WTC11 (cell line): ENCODE measurements at regions of chr6 and their contacts with region 1.

Region 1: DNA sequence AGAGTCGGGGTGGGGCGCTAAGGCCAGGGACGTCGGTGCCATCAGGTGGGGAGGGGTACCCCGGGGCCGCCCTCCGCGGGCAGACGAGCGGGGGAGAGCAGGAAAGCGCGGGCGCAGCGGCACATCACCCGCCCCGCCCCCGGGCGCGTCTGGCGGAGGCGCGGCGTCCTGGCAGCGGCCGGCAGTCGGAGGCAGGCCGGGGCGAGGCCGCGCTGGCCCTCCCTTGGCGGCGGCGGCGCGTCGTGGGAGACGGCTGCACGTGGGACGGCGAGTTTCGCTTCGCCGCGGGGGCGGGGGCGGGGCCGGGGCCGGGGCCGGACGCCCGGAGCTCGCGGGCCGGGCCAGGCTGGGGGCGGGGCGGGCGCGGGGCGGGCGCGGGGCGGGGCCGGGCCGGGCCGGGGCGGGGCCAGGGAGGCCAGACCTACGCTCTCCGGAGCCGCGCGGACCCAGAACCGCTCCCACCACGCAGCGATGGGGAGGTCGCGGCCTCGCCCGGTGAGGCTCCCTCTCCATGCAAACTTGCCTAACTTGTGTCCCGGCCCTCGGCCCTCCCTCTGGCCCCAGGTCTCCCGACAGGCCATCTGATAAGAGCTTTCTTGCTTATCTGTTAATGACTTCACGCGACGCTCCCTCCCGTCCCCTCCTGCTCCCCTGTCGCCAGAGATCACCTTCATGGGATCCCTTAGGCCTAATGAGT is 12.5 kb downstream of the ITPR3 start:
- DNase-seq: peak; percentile 58
- ATAC-seq: peak; percentile 69
- H3K4me3 Mint-ChIP-seq: peak overlapping the region; percentile 83
- H3K27ac Mint-ChIP-seq: peak overlapping the region; percentile 47
- H3K4me1 Mint-ChIP-seq: peaks cover 59% of the 10 kb centered on the region
- H3K27me3 Mint-ChIP-seq: peaks cover 9% of the 10 kb centered on the region; the same call in 1 of the 2 replicates
- CTCF ChIP-seq: no peak

Region 2: DNA sequence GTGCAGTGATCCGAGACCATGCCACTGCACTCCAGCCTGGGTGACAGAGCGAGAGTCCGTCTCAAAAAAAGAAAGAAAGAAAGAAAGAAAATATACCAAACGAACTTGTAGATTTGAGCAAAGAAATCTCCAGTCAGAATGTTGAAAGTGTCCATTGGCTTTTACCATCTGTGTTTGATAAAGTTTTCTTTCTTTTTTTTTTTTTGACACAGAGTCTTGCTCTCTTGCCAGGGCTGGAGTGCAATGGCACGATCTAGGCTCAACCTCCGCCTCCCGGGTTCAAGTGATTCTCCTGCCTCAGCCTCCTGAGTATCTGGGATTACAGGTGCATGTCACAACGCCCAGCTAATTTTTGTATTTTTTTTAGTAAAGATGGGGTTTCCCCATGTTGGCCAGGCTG is 74.8 kb before region 1 on chr6:
- CTCF ChIA-PET with region 1: no interaction called
- POLR2A ChIA-PET with region 1: no interaction called
- DNase-seq: no peak
- ATAC-seq: no peak
- H3K4me3 Mint-ChIP-seq: no peak overlapping the region
- H3K27ac Mint-ChIP-seq: no peak overlapping the region
- H3K4me1 Mint-ChIP-seq: no peaks in the 10 kb centered on the region
- H3K27me3 Mint-ChIP-seq: peaks cover 6% of the 10 kb centered on the region; the same call in 1 of the 2 replicates
- CTCF ChIP-seq: no peak

Region 3: DNA sequence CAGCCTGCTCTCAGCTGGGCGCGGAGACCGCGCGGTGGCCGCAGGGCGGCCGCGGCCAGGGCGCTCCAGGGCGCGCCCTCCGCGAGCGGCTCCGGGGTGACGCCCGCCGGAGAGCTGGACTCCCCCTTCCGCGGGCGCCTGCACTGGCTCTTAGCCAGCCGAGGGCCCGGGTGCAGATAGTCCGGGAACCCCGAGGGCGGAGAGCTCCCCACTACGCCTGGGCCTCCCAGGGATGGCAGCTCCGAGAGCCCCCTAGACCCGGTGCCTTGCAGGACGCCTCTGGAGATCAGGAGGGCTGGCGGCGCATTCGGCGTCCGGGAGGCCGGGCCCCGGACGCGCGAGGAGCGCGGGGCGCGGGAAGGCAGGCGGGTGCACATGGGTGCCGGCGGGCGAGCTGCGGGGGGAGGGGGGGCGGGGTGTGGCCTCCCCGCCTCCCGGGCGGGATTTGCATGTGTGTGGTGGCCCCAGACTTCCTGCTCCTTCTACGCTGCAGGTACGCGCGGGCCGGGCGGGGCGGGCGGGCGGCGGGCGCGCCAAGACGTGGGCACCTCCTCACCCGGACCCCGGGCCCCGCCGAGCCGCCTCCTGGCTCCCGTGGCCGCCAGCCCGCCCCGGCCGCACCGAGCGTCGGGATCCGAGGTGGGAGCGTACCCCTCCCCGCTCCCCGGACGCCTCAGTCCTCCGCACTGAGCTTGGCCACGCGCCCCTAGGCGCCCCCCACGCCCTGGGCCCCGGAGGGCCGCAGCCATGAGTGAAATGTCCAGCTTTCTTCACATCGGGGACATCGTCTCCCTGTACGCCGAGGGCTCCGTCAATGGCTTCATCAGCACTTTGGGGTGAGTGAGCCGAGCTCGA is 12.5 kb before region 1 on chr6 and contains the start of gene ITPR3:
- CTCF ChIA-PET with region 1: interaction called, 62 read pairs
- POLR2A ChIA-PET with region 1: interaction called, 4 read pairs
- DNase-seq: no peak
- ATAC-seq: peak; percentile 47
- H3K4me3 Mint-ChIP-seq: peak within 1 kb of the TSS; percentile 91
- H3K27ac Mint-ChIP-seq: no peak within 1 kb of the TSS; the same call in 1 of the 2 replicates
- H3K4me1 Mint-ChIP-seq: peaks cover 46% of the 10 kb centered on the region
- H3K27me3 Mint-ChIP-seq: peaks cover 15% of the 10 kb centered on the region
- CTCF ChIP-seq: no peak
- total RNA-seq, gene ITPR3: 42.5 to 47.3 TPM (median 42.9 TPM) in 3 replicates